Dendritic cell treated with granulocyte-macrophage colony-stimulating factor and Interleukin-4, amounts not matched to agents 40 ng/mL and 50 ng/mL, for 4 days (primary cell): ENCODE measurements at regions of chrX and their contacts with region 1.

Region 1: DNA sequence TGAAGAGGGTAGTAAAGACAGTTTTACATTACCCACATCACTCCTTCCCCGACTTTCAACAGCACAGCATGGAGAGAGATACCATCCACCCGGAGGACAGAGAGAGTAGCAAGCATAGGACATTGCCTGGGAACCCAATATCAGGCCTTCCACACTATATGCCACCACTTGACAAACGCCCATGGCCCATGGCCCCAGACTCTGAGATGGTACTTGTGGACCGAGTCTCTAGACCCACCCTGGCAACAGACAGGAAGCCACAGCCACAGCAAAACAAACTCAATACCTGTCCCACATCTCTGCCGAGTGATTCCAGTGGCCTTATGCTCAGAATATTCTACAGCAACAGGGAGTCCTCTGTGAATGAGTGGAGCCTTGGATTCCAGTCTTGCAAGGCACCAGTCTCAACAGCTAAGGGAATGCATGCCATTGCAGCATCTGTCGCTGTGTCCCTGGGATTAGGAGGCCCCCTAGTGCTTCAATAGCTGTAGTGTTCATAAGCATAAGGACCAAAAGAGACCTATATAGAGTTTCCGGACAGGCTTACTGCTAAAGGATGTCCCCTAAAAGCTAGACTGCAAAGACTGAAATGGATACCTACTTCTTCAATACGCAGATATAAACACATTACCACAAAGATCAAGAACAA is 14.7 kb upstream of the CT55 start:
- H3K4me3 Mint-ChIP-seq: no peak overlapping the region
- H3K27ac Mint-ChIP-seq: no peak overlapping the region
- H3K4me1 Mint-ChIP-seq: no peaks in the 10 kb centered on the region
- H3K27me3 Mint-ChIP-seq: peaks cover 21% of the 10 kb centered on the region

Region 2: DNA sequence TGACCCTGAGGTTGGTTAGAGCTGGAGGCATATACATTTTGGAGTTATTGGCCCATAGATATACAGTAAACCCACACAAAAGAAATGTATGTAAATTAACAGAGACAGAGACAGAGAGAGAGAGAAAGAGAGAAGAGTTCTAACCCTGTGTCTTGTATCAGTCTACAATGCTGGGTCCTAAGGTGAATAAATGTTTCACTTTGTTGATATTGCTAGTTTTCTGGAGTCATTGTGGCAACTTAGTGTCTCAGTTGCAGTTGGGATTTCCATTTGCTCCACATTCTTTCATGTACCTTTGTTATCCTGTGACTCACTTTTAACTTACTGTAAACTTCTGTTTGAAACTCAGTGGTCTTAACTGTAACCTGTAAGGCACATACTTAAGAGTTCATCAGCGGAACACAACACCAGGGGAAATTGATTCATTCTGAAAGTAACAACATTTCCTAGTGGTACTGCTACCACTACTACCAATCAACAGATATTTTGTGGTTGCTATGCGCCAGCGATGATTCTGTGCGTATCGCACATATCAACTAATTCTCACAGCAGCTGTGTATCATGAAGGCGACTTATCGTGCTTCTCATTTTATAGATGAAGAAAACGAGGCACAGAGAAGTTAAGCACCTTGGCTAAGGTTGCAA is 27.4 kb after region 1 on chrX:
- intact Hi-C with region 1: no loop called
- H3K4me3 Mint-ChIP-seq: no peak overlapping the region
- H3K27ac Mint-ChIP-seq: no peak overlapping the region
- H3K4me1 Mint-ChIP-seq: no peaks in the 10 kb centered on the region
- H3K27me3 Mint-ChIP-seq: peaks cover 4% of the 10 kb centered on the region

Region 3: GRCh38 chrX:135477576-135477975 is 291.7 kb after region 1 on chrX:
- intact Hi-C with region 1: loop called (anchors 1 kb)
- H3K4me3 Mint-ChIP-seq: no peak overlapping the region
- H3K27ac Mint-ChIP-seq: no peak overlapping the region
- H3K4me1 Mint-ChIP-seq: no peaks in the 10 kb centered on the region
- H3K27me3 Mint-ChIP-seq: peaks cover 3% of the 10 kb centered on the region